ENCODE measurements at regions of chr2 and their contacts with region 1.

Region 1: DNA sequence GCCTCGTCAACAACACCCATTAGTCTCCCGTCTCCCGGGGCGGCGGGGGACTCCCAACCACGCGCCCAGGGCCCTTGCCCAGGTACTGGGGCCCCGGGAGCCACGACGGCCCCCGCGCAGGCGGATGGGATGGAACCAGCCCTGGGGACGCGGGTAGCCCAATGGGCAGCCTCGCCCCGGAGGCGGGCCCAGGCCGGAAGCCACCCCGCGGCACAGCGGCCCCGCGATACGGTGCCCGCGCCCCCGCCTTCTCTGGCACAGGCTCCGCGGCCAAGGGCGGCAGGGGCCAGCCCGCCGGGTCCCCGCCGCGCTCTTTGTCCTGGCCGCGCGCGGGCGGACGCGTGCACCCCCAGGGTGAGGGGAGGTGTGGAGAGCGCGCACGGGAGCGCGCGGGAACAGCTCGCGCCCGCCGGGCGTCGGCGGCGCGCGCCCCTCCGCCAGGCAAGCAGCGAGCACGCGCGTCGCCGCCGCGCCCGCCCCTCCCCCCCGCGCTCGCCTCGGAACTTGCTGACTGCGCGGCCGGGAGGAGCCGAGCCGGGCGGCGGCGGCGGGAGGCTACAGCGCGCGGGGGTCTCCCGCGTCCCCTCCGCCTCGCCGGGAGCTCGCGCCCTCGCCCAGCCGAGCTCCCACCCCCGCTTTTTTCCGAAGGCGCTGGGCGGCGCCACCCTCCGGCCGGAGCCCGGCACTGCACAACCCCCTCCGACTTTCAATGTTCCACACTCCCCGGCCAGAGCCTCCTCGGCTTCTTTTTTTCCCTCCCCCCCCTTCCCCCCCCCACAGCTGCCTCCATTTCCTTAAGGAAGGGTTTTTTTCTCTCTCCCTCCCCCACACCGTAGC is at the start of gene UBE2E3:
- DNase-seq: peak; percentile 81
- CTCF ChIP-seq: peak; percentile 78

Region 2: DNA sequence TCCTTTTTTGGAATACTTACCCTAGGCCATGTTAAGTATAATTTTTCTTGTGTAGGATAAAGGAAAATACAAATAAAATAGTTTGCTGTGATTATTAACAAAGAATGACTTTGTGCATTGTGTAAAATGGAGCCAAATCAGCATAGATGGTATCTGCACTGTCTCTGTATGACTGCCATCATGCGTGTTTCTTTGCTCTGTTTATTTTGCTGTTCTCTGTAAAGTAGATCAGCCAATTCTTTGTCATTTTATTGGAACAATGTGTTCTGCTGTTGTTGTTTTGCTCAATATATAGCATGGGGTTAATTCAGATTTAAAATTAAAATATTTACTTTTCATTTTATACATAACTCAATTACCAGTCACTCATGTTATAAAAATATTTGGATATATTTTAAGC is 181.2 kb before region 1 on chr2:
- CTCF ChIA-PET with region 1: no interaction called
- POLR2A ChIA-PET with region 1: no interaction called
- DNase-seq: no peak
- CTCF ChIP-seq: no peak

Region 3: DNA sequence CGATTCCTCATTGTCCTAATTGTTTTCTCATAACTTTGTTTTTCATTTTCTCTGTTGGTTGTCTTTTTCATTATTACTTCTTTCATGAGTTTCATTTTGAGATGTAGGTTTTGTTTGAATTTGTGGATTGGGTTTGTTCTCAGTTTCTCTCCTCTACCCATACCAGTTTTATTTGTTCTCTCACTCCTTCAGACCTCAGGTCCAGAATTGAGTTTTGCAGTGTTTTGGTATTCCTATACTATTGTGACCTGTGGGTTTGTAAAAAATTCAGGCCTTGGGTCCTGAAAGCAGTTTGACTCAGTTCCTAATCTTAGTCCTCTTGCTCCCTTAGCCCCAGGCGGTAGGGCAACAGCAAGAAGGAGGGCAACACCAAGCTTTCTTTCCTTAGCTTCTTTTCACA is 28.2 kb before region 1 on chr2:
- CTCF ChIA-PET with region 1: interaction called, 28 read pairs
- POLR2A ChIA-PET with region 1: no interaction called
- DNase-seq: no peak
- CTCF ChIP-seq: no peak

Region 4: GRCh38 chr2:180970016-180970415 is 10.3 kb before region 1 on chr2:
- CTCF ChIA-PET with region 1: interaction called, 34 read pairs
- POLR2A ChIA-PET with region 1: no interaction called
- DNase-seq: no peak
- CTCF ChIP-seq: no peak

Region 5: DNA sequence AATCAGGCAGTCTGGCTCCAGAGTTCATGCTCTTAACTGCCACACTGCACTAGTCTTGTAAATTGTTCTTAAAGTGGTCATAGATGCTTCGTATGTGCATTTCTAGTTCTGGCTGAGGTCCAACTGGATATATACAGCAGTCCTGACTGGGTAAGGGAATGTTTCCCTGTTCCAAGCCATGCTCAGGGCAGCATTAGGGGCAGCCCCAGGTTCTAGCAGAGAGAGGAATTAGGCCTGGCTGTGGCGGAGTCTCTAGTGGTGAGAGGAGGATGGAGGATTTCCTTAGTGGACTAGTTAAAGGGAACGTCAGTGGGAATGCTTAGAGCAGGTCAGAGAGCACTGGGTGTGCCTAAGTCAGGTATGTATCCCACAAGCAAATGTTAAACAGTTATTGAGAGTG is 28.1 kb after region 1 on chr2:
- CTCF ChIA-PET with region 1: interaction called, 18 read pairs
- POLR2A ChIA-PET with region 1: no interaction called
- DNase-seq: no peak
- CTCF ChIP-seq: no peak

Region 6: DNA sequence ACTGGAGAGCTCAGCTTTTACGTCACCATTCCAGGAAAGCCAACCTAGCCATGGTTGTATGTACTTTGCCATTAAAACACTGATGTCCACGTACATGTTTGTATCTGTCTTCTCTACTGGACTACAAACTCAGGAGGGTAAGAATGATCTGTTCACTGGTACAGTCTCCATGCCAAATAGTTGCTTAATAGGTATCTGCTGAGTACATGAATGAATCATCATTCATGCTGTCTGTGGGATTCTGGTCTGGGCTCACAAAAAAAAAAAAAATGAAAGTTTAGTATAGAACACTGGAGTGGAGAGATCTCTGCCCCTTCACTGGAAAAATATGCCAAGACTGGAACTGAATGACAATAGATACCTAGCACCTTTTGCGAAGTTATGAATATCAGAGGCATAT is 374.3 kb after region 1 on chr2:
- CTCF ChIA-PET with region 1: no interaction called
- POLR2A ChIA-PET with region 1: no interaction called
- DNase-seq: no peak
- CTCF ChIP-seq: no peak